CD8-positive, alpha-beta T cell (primary cell): ENCODE measurements at regions of chr7 and their contacts with region 1.

Region 1: GRCh38 chr7:128739048-128739962 is at the start of gene CALU:
- DNase-seq: peak; percentile 84 to 96 (median 94)
- ATAC-seq: peak; percentile 91
- H3K4me3 ChIP-seq: peak within 1 kb of the TSS; percentile 90 to 93
- H3K4me3 Mint-ChIP-seq: peak within 1 kb of the TSS; percentile 98
- H3K27ac ChIP-seq: peak within 1 kb of the TSS; percentile 90 to 92
- H3K27ac Mint-ChIP-seq: peak within 1 kb of the TSS; percentile 96
- H3K4me1 ChIP-seq: peaks cover 18% of the 10 kb centered on the region
- H3K4me1 Mint-ChIP-seq: peaks cover 44% of the 10 kb centered on the region
- H3K27me3 ChIP-seq: no peaks in the 10 kb centered on the region
- H3K27me3 Mint-ChIP-seq: no peaks in the 10 kb centered on the region
- CTCF ChIP-seq: no peak
- total RNA-seq, gene CALU: 29.9 to 31.9 TPM

Region 2: DNA sequence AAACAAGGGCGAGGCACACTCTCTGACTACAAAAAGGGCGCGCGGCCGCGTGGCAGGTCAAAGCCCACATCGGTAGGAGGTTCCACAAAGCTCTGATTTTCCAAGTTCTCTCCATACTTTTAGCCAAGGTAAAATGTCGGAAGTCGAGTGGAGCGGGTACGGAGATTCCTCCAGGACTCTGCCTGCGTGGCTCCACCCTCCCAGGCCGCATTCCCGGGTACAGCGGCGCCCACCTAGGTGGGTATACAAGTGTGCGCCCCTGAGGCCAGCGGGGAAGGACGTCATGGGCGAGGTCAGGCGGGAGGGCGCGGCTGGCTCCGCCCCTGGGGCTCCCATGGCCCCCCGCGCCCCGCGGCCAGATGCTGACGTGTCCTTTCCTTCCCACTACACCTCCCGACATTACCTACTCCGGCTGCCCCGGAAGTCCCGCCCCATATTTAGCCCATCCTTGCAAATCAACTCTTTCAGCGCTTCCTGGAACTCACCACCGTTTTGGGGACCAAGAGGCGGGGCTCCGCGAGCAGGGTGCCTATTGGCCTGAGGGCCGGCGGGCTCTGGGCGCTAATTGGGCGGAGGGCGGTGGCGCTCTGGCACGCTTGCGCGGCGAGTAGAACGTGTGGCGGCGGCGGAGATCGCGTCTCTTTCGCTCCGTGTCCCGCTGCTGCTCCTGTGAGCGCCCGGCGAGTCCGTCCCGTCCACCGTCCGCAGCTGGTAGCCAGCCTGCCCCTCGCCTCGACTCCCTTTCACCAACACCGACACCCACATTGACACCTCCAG is 1087.6 kb before region 1 on chr7 and contains the start of gene SND1:
- CTCF ChIA-PET with region 1: no interaction called
- POLR2A ChIA-PET with region 1: no interaction called
- intact Hi-C with region 1: loop called in 1 of 2 experiments (anchors 5 kb)
- DNase-seq: peak; percentile 96 to 100 (median 98)
- ATAC-seq: peak; percentile 94
- H3K4me3 ChIP-seq: peak within 1 kb of the TSS; percentile 82 to 98
- H3K4me3 Mint-ChIP-seq: peak within 1 kb of the TSS; percentile 98
- H3K27ac ChIP-seq: peak within 1 kb of the TSS; percentile 92 to 98
- H3K27ac Mint-ChIP-seq: peak within 1 kb of the TSS; percentile 99
- H3K4me1 ChIP-seq: peaks cover 35% of the 10 kb centered on the region
- H3K4me1 Mint-ChIP-seq: peaks cover 50% of the 10 kb centered on the region
- H3K27me3 ChIP-seq: no peaks in the 10 kb centered on the region
- H3K27me3 Mint-ChIP-seq: no peaks in the 10 kb centered on the region
- CTCF ChIP-seq: no peak
- total RNA-seq, gene SND1: 87.7 to 101 TPM

Region 3: DNA sequence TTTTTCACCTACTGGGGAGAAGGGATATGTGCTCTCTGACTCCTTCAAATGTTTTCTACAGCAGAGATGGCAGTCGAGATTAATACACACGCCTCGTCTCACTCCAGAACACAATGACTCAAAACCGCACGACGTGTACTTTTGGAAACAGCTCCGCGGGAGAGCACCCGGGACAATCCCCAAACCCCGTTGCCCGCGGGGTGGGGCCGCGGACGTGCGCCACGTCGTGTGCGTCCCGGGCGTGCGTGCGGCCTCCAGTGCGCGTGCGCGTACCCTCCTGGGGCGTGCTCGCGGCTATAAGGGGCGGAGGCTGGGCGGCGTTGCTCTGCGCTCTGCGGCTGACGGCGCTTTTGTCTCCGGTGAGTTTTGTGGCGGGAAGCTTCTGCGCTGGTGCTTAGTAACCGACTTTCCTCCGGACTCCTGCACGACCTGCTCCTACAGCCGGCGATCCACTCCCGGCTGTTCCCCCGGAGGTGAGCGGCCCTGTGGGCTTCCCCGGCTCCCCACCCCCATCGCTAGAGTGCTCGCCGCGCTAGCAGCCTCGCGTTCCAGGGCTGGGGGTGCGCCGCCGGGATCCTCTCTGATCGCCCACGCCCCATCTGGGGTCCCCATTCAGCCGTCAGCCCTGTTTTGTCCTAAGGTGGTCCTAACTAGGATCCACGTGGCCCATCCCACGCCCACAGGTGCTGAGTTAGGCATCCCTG is 283.6 kb before region 1 on chr7 and contains the start of gene HILPDA:
- CTCF ChIA-PET with region 1: no interaction called
- POLR2A ChIA-PET with region 1: no interaction called
- intact Hi-C with region 1: loop called in 1 of 2 experiments (anchors 1 kb)
- DNase-seq: peak; percentile 84 to 98 (median 93)
- ATAC-seq: peak; percentile 92
- H3K4me3 ChIP-seq: peak within 1 kb of the TSS; percentile 83 to 91
- H3K4me3 Mint-ChIP-seq: peak within 1 kb of the TSS; percentile 95
- H3K27ac ChIP-seq: peak within 1 kb of the TSS; percentile 60 to 73
- H3K27ac Mint-ChIP-seq: peak within 1 kb of the TSS; percentile 98
- H3K4me1 ChIP-seq: peaks cover 19% of the 10 kb centered on the region
- H3K4me1 Mint-ChIP-seq: peaks cover 26% of the 10 kb centered on the region
- H3K27me3 ChIP-seq: no peaks in the 10 kb centered on the region
- H3K27me3 Mint-ChIP-seq: no peaks in the 10 kb centered on the region
- CTCF ChIP-seq: no peak
- total RNA-seq, gene HILPDA: 1.3 to 2.0 TPM

Region 4: GRCh38 chr7:128530855-128531104 is 208.5 kb before region 1 on chr7:
- CTCF ChIA-PET with region 1: no interaction called
- POLR2A ChIA-PET with region 1: no interaction called
- intact Hi-C with region 1: loop called in 1 of 2 experiments (anchors 5 kb)
- DNase-seq: no peak
- ATAC-seq: no peak
- H3K4me3 ChIP-seq: peak overlapping the region; percentile 50
- H3K4me3 Mint-ChIP-seq: no peak overlapping the region
- H3K27ac ChIP-seq: peak overlapping the region; percentile 47 to 79
- H3K27ac Mint-ChIP-seq: no peak overlapping the region
- H3K4me1 ChIP-seq: peaks cover 15% of the 10 kb centered on the region
- H3K4me1 Mint-ChIP-seq: peaks cover 34% of the 10 kb centered on the region
- H3K27me3 ChIP-seq: no peaks in the 10 kb centered on the region
- H3K27me3 Mint-ChIP-seq: no peaks in the 10 kb centered on the region
- CTCF ChIP-seq: no peak

Region 5: GRCh38 chr7:128791121-128791961 is 52.0 kb after region 1 on chr7:
- CTCF ChIA-PET with region 1: interaction called, 3 read pairs
- POLR2A ChIA-PET with region 1: interaction called, 12 read pairs
- intact Hi-C with region 1: loop called (anchors 1 to 2 kb)
- DNase-seq: peak; percentile 40 to 89 (median 79)
- ATAC-seq: peak; percentile 95
- H3K4me3 ChIP-seq: peak overlapping the region; percentile 71 to 89
- H3K4me3 Mint-ChIP-seq: peak overlapping the region; percentile 84
- H3K27ac ChIP-seq: peak overlapping the region in 1 of 2 experiments; percentile 19
- H3K27ac Mint-ChIP-seq: no peak overlapping the region
- H3K4me1 ChIP-seq: peaks cover 9% of the 10 kb centered on the region
- H3K4me1 Mint-ChIP-seq: peaks cover 20% of the 10 kb centered on the region
- H3K27me3 ChIP-seq: no peaks in the 10 kb centered on the region
- H3K27me3 Mint-ChIP-seq: no peaks in the 10 kb centered on the region
- CTCF ChIP-seq: no peak

Region 6: GRCh38 chr7:128862571-128863432 is 123.5 kb after region 1 on chr7 and contains the start of gene ATP6V1F:
- CTCF ChIA-PET with region 1: interaction called, 4 read pairs
- POLR2A ChIA-PET with region 1: interaction called, 4 read pairs
- intact Hi-C with region 1: loop called (anchors 1 to 5 kb)
- DNase-seq: peak; percentile 97 to 100 (median 99)
- ATAC-seq: peak; percentile 87
- H3K4me3 ChIP-seq: peak within 1 kb of the TSS; percentile 80 to 92
- H3K4me3 Mint-ChIP-seq: peak within 1 kb of the TSS; percentile 96
- H3K27ac ChIP-seq: peak within 1 kb of the TSS; percentile 71 to 74
- H3K27ac Mint-ChIP-seq: peak within 1 kb of the TSS; percentile 94
- H3K4me1 ChIP-seq: peaks cover 17% of the 10 kb centered on the region
- H3K4me1 Mint-ChIP-seq: peaks cover 34% of the 10 kb centered on the region
- H3K27me3 ChIP-seq: no peaks in the 10 kb centered on the region
- H3K27me3 Mint-ChIP-seq: no peaks in the 10 kb centered on the region
- CTCF ChIP-seq: no peak
- total RNA-seq, gene ATP6V1F: 54.8 to 59.3 TPM